ENCODE measurements at regions of chr3 and their contacts with region 1.

Region 1: DNA sequence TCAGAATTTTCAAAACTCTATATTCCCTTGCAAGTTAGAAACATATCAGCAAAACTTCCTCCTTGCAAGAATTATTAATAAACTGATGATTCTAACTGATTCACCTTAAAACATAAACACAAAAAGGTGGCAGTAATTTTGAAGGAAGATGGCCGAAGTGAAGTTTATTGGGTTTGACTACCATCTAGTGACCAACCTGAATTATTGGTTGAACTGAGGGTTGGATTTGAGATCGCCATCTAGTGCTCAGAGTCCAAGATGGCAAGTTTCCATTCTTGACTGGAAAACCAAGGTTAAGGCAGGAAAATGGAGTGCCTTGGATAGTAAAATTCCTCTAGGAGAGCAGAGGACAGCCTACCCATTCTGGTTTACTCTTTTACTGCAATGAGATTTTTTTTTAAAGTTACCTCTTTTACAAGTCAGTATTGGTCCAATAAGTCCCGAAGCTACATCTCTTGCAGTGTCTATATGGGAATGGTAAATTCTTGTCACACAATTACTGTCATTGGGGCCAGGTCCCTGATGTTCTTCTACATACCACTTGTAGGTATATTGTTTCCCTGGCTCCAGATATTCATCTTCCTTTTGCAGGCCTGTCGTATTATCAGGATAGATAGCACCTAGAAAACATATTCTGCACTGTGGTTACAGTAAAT is 51.6 kb upstream of the CP start:
- DNase-seq: peak; percentile 40
- H3K4me3 ChIP-seq: no peak overlapping the region
- H3K27ac ChIP-seq: no peak overlapping the region
- H3K4me1 ChIP-seq: peaks cover 0 to 9% (median 0%) of the 10 kb centered on the region in 4 donors
- H3K27me3 ChIP-seq: no peaks in the 10 kb centered on the region
- CTCF ChIP-seq: peak; percentile 79 to 97 (median 88)
- EP300 ChIP-seq: no peak
- POLR2A ChIP-seq: no peak

Region 2: GRCh38 chr3:148955544-148956346 is 317.5 kb before region 1 on chr3:
- in situ Hi-C with region 1: loop called in 2 of 4 experiments (anchors 10 kb)
- intact Hi-C with region 1: loop called (anchors 5 kb)
- DNase-seq: peak; percentile 35
- H3K4me3 ChIP-seq: no peak overlapping the region
- H3K27ac ChIP-seq: peak overlapping the region; percentile 67 to 91 (median 83)
- H3K4me1 ChIP-seq: peaks cover 0 to 20% (median 4%) of the 10 kb centered on the region in 4 donors
- H3K27me3 ChIP-seq: no peaks in the 10 kb centered on the region
- CTCF ChIP-seq: peak; percentile 41 to 58 (median 53)
- EP300 ChIP-seq: no peak
- POLR2A ChIP-seq: no peak

Region 3: GRCh38 chr3:148964809-148965208 is 308.4 kb before region 1 on chr3:
- in situ Hi-C with region 1: loop called in 1 of 4 experiments (anchors 5 kb)
- intact Hi-C with region 1: no loop called
- DNase-seq: no peak
- H3K4me3 ChIP-seq: no peak overlapping the region
- H3K27ac ChIP-seq: peak overlapping the region in 1 of 4 donors; percentile 24
- H3K4me1 ChIP-seq: no peaks in the 10 kb centered on the region
- H3K27me3 ChIP-seq: no peaks in the 10 kb centered on the region
- CTCF ChIP-seq: no peak
- EP300 ChIP-seq: no peak
- POLR2A ChIP-seq: no peak

Region 4: GRCh38 chr3:148975248-148975647 is 298.0 kb before region 1 on chr3:
- in situ Hi-C with region 1: no loop called
- intact Hi-C with region 1: no loop called
- DNase-seq: no peak
- H3K4me3 ChIP-seq: no peak overlapping the region
- H3K27ac ChIP-seq: peak overlapping the region in 3 of 4 donors; percentile 34 to 57 (median 50)
- H3K4me1 ChIP-seq: peaks cover 0 to 10% (median 0%) of the 10 kb centered on the region in 4 donors
- H3K27me3 ChIP-seq: peaks cover 4% of the 10 kb centered on the region
- CTCF ChIP-seq: no peak
- EP300 ChIP-seq: no peak
- POLR2A ChIP-seq: no peak

Region 5: DNA sequence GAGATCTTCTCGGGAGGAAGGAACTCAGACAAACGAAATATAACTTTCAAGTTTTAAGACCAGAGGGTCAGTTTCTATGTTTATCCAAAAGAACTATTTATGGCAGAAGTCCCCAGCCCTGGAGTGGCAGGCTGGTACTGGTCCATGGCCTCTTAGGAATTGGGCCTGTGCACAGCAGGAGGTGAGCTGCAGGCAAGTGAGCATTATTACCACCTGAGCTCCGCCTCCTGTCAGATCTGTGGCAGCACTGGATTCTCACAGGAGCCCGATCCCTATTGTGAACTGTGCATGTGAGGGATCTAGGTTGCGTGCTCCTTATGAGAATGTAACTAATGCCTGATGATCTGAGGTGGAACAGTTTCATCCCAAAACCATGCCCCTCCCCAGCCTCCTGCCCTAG is 158.1 kb before region 1 on chr3:
- in situ Hi-C with region 1: loop called (anchors 5 to 10 kb)
- intact Hi-C with region 1: loop called (anchors 2 kb)
- DNase-seq: no peak
- H3K4me3 ChIP-seq: no peak overlapping the region
- H3K27ac ChIP-seq: no peak overlapping the region
- H3K4me1 ChIP-seq: no peaks in the 10 kb centered on the region
- H3K27me3 ChIP-seq: no peaks in the 10 kb centered on the region
- CTCF ChIP-seq: no peak
- EP300 ChIP-seq: no peak
- POLR2A ChIP-seq: no peak

Region 6: DNA sequence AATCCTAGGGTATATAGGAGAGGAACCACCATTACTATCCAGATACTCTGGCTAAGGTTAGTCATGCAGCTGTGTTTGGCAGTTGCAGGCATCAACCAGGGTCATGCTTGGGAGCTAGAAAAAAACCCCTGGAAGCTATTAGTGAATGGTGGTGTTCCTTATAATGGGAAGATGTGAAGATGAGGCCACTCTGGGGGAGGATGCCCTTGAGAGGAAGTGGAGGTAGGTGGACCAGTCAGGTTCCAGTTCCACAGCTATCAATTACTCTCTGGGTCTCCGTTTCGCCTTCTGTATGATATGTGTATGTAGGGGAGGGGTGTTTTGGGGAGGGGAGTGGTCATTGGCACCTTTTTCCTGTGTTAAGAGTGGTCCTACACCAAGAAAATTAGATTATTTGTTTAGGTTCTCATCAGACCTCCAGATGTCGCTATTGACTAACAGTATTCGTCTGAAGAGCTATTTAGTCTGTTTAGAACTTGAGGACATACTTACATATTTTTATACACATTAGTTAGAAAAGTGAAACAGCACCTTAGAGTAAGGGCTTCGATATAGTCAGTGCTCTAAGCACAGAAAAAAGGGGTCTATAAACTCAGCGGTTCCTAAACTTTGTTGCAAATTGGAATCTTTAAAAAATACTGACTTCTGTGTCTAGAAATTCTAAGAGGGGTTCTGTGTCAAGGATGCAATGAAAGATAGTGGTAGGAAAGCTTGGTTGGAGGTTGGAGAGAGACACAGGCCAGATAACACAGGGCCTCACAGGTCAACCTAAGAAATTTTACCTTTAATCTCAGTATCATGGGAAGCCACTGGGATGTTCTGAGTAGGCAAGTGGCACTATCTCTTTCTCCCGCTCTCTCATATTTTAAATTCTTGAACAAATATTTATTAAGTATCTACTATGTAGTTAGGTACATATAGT is 152.9 kb before region 1 on chr3:
- in situ Hi-C with region 1: loop called (anchors 5 to 10 kb)
- intact Hi-C with region 1: loop called (anchors 2 kb)
- DNase-seq: no peak
- H3K4me3 ChIP-seq: no peak overlapping the region
- H3K27ac ChIP-seq: no peak overlapping the region
- H3K4me1 ChIP-seq: peaks cover 0 to 3% (median 0%) of the 10 kb centered on the region in 4 donors
- H3K27me3 ChIP-seq: no peaks in the 10 kb centered on the region
- CTCF ChIP-seq: peak; percentile 49 to 64 (median 57)
- EP300 ChIP-seq: no peak
- POLR2A ChIP-seq: no peak

Region 7: GRCh38 chr3:149129326-149130205 is 143.7 kb before region 1 on chr3 and contains the start of gene HPS3:
- in situ Hi-C with region 1: loop called in 2 of 4 experiments (anchors 5 to 10 kb)
- intact Hi-C with region 1: no loop called
- DNase-seq: peak; percentile 94
- H3K4me3 ChIP-seq: peak within 1 kb of the TSS; percentile 91 to 93 (median 91)
- H3K27ac ChIP-seq: peak within 1 kb of the TSS; percentile 91 to 96 (median 94)
- H3K4me1 ChIP-seq: peaks cover 5 to 40% (median 17%) of the 10 kb centered on the region in 4 donors
- H3K27me3 ChIP-seq: no peaks in the 10 kb centered on the region
- CTCF ChIP-seq: peak in 1 of 5 experiments; percentile 6
- EP300 ChIP-seq: no peak
- POLR2A ChIP-seq: peak; percentile 87
- total RNA-seq, gene HPS3: 10.0 to 20.2 (median 17.9) TPM

Measured in transverse colon (tissue), 4 donors.